GM18951 (cell line): ENCODE measurements at regions of chr22 and their contacts with region 1.

Region 1: GRCh38 chr22:35350539-35351503 is 30.1 kb upstream of the HMOX1 start:
- POLR2A ChIP-seq: peak; percentile 31

Region 2: DNA sequence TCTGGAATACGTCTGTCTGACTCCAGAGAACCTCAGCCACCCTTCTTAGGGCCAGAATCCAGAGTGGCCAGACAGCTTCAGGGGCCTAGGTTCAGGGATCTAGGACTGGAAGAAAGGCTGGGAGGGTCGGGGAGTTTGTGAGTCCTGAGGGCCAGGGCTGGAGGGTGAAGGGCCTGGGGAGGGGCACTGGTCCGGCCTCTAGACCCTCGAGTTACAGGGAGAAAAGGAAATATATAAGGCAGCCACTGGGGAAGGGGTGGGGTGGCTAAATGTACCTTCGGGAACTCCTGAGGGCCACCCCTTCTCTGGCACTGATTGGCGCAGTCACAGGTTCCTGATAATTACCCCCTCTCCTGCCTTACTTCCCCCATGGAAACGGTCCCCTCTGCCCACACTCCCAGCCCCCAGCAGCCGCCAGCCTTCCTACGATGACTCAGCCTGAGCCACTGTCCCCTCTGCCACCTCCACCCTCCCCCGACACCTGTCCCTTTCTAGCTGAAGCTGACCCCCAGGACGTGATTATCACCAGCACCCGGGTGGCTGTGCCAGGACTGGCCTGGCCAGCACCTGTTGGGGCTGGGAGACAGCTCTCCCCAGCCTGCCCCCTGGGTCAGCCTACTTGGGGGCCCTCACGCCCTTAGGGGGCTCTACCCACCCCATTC is 239.9 kb after region 1 on chr22:
- in situ Hi-C with region 1: loop called (anchors 5 kb)
- POLR2A ChIP-seq: no peak